ENCODE measurements at regions of chr5 and their contacts with region 1.

Region 1: GRCh38 chr5:33601881-33602280 is 161.1 kb downstream of the TARS1 start:
- DNase-seq: no peak
- ATAC-seq: no peak
- H3K4me3 ChIP-seq: no peak overlapping the region
- H3K4me3 Mint-ChIP-seq: no peak overlapping the region
- H3K27ac ChIP-seq: no peak overlapping the region
- H3K27ac Mint-ChIP-seq: no peak overlapping the region
- H3K4me1 ChIP-seq: no peaks in the 10 kb centered on the region
- H3K4me1 Mint-ChIP-seq: no peaks in the 10 kb centered on the region
- H3K27me3 ChIP-seq: no peaks in the 10 kb centered on the region
- H3K27me3 Mint-ChIP-seq: no peaks in the 10 kb centered on the region
- CTCF ChIP-seq: no peak

Region 2: DNA sequence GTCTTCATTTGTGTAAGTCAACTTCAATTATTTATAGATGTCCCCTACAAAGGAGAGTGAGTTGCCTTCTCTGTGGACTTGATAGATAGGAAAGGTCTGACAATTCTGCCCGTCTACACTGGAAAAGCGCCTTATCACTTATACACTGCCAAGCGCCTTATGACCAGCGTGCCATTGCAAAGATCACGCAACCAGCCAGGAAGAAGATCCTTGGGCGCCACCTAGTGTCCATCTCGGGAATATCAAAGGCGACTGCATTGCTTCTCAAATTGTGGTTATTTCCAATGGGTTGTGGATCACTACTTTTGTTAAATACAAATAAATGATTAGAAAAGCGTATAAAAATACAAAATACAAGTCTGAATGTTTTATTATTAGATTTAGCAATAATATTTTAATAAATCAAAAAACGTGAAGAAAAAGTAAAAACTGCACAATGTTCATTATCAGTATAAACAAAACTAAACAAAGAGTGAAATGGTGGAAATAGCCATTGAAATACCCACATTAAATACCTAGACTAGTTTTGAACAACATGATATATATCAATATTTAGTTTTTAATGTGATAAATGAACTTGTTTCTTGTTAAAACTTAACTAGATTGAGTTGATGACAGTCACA is 988.7 kb before region 1 on chr5:
- CTCF ChIA-PET with region 1: no interaction called
- POLR2A ChIA-PET with region 1: no interaction called
- intact Hi-C with region 1: no loop called
- DNase-seq: peak; percentile 81
- ATAC-seq: peak; percentile 77
- H3K4me3 ChIP-seq: no peak overlapping the region
- H3K4me3 Mint-ChIP-seq: no peak overlapping the region
- H3K27ac ChIP-seq: no peak overlapping the region
- H3K27ac Mint-ChIP-seq: peak overlapping the region; percentile 17
- H3K4me1 ChIP-seq: peaks cover 0 to 4% of the 10 kb centered on the region in 2 donors
- H3K4me1 Mint-ChIP-seq: peaks cover 3% of the 10 kb centered on the region
- H3K27me3 ChIP-seq: no peaks in the 10 kb centered on the region
- H3K27me3 Mint-ChIP-seq: no peaks in the 10 kb centered on the region
- CTCF ChIP-seq: peak; percentile 98

Region 3: GRCh38 chr5:33588654-33589372 is 13.1 kb before region 1 on chr5:
- CTCF ChIA-PET with region 1: interaction called, 10 read pairs
- POLR2A ChIA-PET with region 1: no interaction called
- intact Hi-C with region 1: no loop called
- DNase-seq: peak; percentile 37
- ATAC-seq: no peak
- H3K4me3 ChIP-seq: no peak overlapping the region
- H3K4me3 Mint-ChIP-seq: no peak overlapping the region
- H3K27ac ChIP-seq: no peak overlapping the region
- H3K27ac Mint-ChIP-seq: no peak overlapping the region
- H3K4me1 ChIP-seq: no peaks in the 10 kb centered on the region
- H3K4me1 Mint-ChIP-seq: no peaks in the 10 kb centered on the region
- H3K27me3 ChIP-seq: no peaks in the 10 kb centered on the region
- H3K27me3 Mint-ChIP-seq: no peaks in the 10 kb centered on the region
- CTCF ChIP-seq: peak; percentile 70

Measured in B cell (primary cell).